ENCODE measurements at regions of chr16 and their contacts with region 1.

Region 1: GRCh38 chr16:79071424-79071823 is 529.1 kb downstream of the MAF start:
- DNase-seq: no peak
- H3K4me3 Mint-ChIP-seq: no peak overlapping the region
- H3K27ac Mint-ChIP-seq: no peak overlapping the region
- H3K4me1 Mint-ChIP-seq: peaks cover 56% of the 10 kb centered on the region
- H3K27me3 Mint-ChIP-seq: no peaks in the 10 kb centered on the region

Region 2: DNA sequence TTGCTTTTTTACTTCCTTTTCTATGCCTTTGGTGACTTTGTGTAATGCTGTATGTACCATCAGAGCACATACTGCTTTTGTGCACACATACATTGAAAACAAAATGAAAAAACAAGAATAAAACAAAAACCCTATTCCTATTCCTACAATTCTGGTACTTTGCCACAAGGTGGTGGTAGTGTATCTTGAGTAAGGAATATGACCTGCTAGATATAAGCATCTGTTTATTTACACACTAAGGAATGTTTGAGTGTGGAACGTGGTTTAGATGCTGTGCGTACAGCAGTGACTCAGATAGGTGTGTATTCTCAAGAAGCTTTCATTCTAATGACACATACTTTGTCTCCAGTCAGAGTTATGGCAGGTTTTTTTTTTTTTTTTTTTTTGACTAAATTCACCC is 365.7 kb before region 1 on chr16:
- intact Hi-C with region 1: loop called (anchors 1 kb)
- DNase-seq: peak; percentile 65
- H3K4me3 Mint-ChIP-seq: no peak overlapping the region
- H3K27ac Mint-ChIP-seq: no peak overlapping the region
- H3K4me1 Mint-ChIP-seq: peaks cover 5% of the 10 kb centered on the region
- H3K27me3 Mint-ChIP-seq: peaks cover 4% of the 10 kb centered on the region

Region 3: DNA sequence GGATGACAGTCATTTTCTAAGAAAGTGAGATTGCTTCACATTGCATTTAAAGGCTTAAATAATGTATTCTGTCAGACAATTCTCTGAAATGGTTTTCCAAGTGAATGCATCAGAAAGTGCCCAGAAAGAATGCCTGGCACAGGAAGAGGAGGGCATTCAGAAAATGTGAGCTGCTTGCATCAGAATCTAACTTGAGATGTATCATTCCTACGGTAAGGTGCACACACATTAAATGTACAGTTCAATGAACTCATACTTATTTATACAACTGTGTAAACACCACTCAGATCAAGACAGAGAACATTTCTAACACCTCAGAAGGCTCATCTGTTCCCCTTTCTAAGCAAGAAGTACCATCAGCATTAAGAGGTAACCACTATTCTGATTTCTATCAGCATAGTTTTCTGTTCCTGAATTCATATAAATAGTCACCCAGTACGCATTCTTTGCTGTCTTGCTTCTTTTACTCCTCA is 108.9 kb before region 1 on chr16:
- intact Hi-C with region 1: loop called (anchors 2 kb)
- DNase-seq: no peak
- H3K4me3 Mint-ChIP-seq: no peak overlapping the region
- H3K27ac Mint-ChIP-seq: peak overlapping the region; percentile 46
- H3K4me1 Mint-ChIP-seq: peaks cover 8% of the 10 kb centered on the region
- H3K27me3 Mint-ChIP-seq: no peaks in the 10 kb centered on the region

Region 4: GRCh38 chr16:79217375-79218011 is 146.1 kb after region 1 on chr16:
- intact Hi-C with region 1: loop called (anchors 5 kb)
- DNase-seq: peak; percentile 80
- H3K4me3 Mint-ChIP-seq: peak overlapping the region; percentile 4
- H3K27ac Mint-ChIP-seq: peak overlapping the region; percentile 50
- H3K4me1 Mint-ChIP-seq: peaks cover 22% of the 10 kb centered on the region
- H3K27me3 Mint-ChIP-seq: peaks cover 7% of the 10 kb centered on the region

Region 5: DNA sequence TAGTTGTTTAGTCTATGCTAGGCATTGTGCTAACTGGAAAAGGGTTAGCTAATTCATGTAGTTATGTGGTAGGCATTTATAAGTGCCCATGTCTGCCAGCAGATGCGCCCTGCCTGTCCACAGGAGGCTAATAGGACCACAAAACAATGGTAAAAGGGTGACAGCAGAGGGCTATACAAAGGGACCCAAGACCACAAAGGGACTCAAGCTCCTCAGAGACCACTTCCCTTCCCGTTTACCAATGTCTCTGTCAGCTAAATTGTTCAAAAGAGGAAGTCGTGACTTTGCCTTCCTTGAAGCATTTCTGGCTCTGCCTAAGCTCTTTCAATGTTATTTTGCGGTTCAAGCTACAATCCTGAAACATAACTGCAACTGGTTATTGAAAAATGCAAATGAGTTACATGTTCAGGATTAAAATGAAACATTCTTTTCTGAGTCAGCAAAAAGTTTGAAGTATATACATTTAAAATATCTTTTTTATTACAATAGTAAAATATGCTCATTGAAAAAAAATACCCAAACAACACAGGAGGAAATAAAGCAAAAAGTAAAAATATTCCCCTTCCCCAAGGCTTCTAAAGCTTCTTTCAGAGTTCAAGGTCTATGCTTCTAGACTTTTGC is 379.9 kb after region 1 on chr16:
- intact Hi-C with region 1: loop called (anchors 10 kb)
- DNase-seq: peak; percentile 61
- H3K4me3 Mint-ChIP-seq: no peak overlapping the region
- H3K27ac Mint-ChIP-seq: peak overlapping the region; percentile 31
- H3K4me1 Mint-ChIP-seq: peaks cover 14% of the 10 kb centered on the region
- H3K27me3 Mint-ChIP-seq: peaks cover 19% of the 10 kb centered on the region

Region 6: DNA sequence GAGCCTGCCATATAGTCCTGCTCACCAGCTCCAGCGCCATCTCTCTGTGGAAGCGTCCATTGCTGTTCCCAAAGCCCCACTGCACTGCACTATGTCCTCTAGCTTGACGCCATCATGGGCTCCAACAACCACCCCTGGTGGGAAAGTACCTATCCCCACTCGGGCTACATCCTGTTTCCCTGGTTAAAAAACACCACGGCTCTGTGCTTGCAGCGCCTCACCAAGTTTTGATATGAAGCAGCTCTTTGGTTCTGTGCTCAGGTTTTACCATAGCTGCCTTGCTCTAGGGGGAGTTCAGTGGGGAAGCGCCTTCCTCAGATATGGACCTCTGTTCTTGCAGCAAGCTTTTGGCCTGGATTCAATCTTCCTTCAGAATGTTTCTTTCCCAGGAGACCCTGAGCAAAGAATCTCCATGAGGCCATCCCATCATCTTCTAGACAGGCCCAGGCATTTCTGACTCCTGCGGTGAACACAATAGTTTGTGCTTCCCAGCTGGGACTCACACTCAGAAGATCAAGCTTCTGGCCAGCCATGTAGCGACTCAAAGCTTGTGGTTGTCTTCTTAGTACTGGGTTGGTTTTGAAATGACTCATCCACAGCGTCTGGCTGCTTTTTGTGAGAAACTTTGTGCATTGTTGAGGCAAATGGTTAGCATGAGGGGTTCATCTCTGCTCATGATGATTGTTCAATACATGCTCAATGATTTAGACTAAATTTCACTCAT is 1508.8 kb after region 1 on chr16:
- intact Hi-C with region 1: loop called (anchors 10 kb)
- DNase-seq: peak; percentile 94
- H3K4me3 Mint-ChIP-seq: peak overlapping the region; percentile 80
- H3K27ac Mint-ChIP-seq: peak overlapping the region; percentile 96
- H3K4me1 Mint-ChIP-seq: peaks cover 58% of the 10 kb centered on the region
- H3K27me3 Mint-ChIP-seq: no peaks in the 10 kb centered on the region

Measured in activated CD4-positive, alpha-beta T cell treated with anti-CD3 and anti-CD28 coated beads, Interleukin-2, amount 10 ng/mL, durations not matched to agents 24 days and 14 days (primary cell).